ENCODE measurements at regions of chr19 and their contacts with region 1.

Region 1: DNA sequence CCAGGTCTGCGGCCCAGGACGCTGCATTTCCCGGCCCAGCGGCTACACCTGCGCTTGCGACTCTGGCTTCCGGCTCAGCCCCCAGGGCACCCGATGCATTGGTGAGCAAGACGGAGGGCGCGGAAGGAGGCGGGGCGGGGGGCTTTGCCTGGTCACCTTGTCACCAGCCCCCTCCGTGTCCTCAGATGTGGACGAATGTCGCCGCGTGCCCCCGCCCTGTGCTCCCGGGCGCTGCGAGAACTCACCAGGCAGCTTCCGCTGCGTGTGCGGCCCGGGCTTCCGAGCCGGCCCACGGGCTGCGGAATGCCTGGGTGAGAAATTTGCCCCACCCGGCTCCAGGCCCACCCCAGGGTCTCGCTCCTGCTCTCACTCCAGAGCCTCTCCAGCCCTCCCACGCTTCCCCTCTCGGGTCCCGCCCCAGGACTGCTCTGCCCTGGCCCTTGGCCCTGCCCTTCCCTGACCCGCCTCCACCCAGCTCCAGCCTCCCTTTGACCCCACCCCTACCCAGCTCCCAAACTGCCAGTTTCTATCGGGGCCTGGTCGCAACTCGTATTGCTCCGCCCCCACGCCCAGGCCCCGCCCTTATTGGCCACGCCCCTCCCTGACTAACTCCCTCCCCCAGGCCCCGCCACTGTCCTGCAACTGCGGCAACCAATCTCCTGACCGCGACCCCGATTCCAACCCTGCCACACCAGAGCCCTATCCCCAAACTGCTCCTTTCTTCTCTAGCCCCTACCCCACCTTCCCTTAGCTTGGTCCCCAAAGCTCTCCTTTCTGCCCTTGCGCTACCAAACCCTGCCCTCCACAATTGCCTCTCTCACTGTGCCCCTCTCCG is 8.6 kb downstream of the LTBP4 start:
- DNase-seq: peak; percentile 74 to 86 (median 82)
- H3K4me3 ChIP-seq: peak overlapping the region in 1 of 2 donors; percentile 63
- H3K4me3 Mint-ChIP-seq: peak overlapping the region; percentile 77 to 91 (median 88)
- H3K27ac ChIP-seq: peak overlapping the region; percentile 66
- H3K27ac Mint-ChIP-seq: peak overlapping the region; percentile 94 to 100 (median 97)
- H3K4me1 ChIP-seq: peaks cover 82% of the 10 kb centered on the region
- H3K4me1 Mint-ChIP-seq: peaks cover 39 to 98% (median 61%) of the 10 kb centered on the region in 4 donors
- H3K27me3 ChIP-seq: no peaks in the 10 kb centered on the region
- H3K27me3 Mint-ChIP-seq: no peaks in the 10 kb centered on the region

Region 2: DNA sequence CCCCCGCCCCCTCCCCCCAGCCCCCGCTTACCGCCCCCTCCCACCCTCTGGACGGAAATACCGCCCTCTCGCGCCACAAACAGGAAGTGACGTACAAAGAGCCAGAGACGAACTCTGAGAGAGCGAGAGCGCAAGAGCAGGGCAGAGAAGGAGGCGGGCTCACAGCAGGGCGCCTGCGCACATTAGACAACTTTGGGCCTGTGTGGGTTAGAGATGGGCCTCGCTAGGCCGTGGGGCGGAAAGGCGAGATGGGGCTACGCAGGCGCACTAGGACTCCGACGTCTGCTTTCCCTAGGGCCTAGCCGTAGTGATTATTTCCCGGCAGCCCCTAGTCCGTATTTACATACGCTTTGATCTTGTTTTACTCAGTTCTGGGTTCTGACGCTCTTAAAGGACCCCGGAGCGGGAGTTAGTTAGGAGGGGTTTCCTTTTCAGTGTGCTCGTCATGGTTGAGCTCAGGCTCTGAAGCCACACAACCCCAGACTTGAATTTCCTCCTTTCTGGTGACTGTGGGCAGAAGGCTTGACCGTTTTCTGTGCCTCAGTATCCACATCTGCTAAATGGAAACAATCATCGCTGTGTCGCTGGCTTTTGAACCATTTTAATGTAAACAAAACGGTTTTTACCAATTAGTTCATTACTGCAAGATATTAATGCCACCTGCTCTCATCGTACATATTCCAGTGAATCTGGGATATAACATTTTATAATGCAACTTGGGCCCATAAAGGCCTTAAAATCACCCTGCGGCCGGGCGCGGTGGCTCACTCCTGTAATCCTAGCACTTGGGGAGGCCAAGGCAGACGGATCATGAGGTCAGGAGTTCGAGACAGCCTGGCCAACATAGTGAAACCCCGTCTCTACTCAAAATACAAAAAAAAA is 324.2 kb before region 1 on chr19:
- CTCF ChIA-PET with region 1: no interaction called
- POLR2A ChIA-PET with region 1: interaction called, 3 read pairs
- intact Hi-C with region 1: loop called (anchors 5 kb)
- DNase-seq: peak; percentile 97 to 100 (median 100)
- H3K4me3 ChIP-seq: peak overlapping the region; percentile 45 to 58
- H3K4me3 Mint-ChIP-seq: peak overlapping the region; percentile 84 to 98 (median 92)
- H3K27ac ChIP-seq: peak overlapping the region; percentile 88
- H3K27ac Mint-ChIP-seq: peak overlapping the region; percentile 93 to 99 (median 98)
- H3K4me1 ChIP-seq: peaks cover 49% of the 10 kb centered on the region
- H3K4me1 Mint-ChIP-seq: peaks cover 26 to 56% (median 40%) of the 10 kb centered on the region in 4 donors
- H3K27me3 ChIP-seq: no peaks in the 10 kb centered on the region
- H3K27me3 Mint-ChIP-seq: no peaks in the 10 kb centered on the region

Region 3: DNA sequence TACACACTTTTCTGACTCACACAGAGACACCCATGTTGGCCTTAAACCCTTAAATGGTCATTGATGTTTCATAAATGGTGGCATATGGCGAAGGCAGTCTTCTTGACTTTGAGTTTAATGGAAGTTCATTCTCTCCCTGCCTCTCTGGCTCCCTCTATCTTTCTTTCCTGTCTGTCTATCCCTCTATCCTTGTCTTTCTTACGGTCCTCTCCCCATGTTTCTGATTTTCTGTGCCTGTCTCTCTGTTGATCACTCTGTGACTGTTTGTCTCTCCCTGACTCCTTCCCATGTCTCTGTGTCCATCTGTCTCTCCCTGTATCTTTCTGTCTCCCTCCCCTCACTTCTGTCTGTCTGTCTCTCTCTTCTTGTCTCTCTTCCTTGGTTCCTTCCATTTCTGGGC is 76.3 kb before region 1 on chr19:
- CTCF ChIA-PET with region 1: no interaction called
- POLR2A ChIA-PET with region 1: no interaction called
- intact Hi-C with region 1: no loop called
- DNase-seq: no peak
- H3K4me3 ChIP-seq: no peak overlapping the region
- H3K4me3 Mint-ChIP-seq: no peak overlapping the region
- H3K27ac ChIP-seq: no peak overlapping the region
- H3K27ac Mint-ChIP-seq: no peak overlapping the region
- H3K4me1 ChIP-seq: peaks cover 14% of the 10 kb centered on the region
- H3K4me1 Mint-ChIP-seq: peaks cover 7 to 24% (median 14%) of the 10 kb centered on the region in 4 donors
- H3K27me3 ChIP-seq: peaks cover 9% of the 10 kb centered on the region
- H3K27me3 Mint-ChIP-seq: peaks cover 16 to 27% of the 10 kb centered on the region in 2 donors

Region 4: GRCh38 chr19:40560092-40560507 is 49.7 kb before region 1 on chr19:
- CTCF ChIA-PET with region 1: no interaction called
- POLR2A ChIA-PET with region 1: no interaction called
- intact Hi-C with region 1: no loop called
- DNase-seq: no peak
- H3K4me3 ChIP-seq: no peak overlapping the region
- H3K4me3 Mint-ChIP-seq: no peak overlapping the region
- H3K27ac ChIP-seq: no peak overlapping the region
- H3K27ac Mint-ChIP-seq: no peak overlapping the region
- H3K4me1 ChIP-seq: no peaks in the 10 kb centered on the region
- H3K4me1 Mint-ChIP-seq: peaks cover 0 to 2% (median 0%) of the 10 kb centered on the region in 4 donors
- H3K27me3 ChIP-seq: no peaks in the 10 kb centered on the region
- H3K27me3 Mint-ChIP-seq: peaks cover 31 to 38% of the 10 kb centered on the region in 2 donors

Region 5: GRCh38 chr19:40570313-40571004 is 39.3 kb before region 1 on chr19:
- CTCF ChIA-PET with region 1: interaction called, 5 read pairs
- POLR2A ChIA-PET with region 1: interaction called, 71 read pairs
- intact Hi-C with region 1: loop called (anchors 2 kb)
- DNase-seq: peak; percentile 95 to 98 (median 98)
- H3K4me3 ChIP-seq: peak overlapping the region; percentile 17 to 61
- H3K4me3 Mint-ChIP-seq: peak overlapping the region; percentile 65 to 88 (median 82)
- H3K27ac ChIP-seq: no peak overlapping the region
- H3K27ac Mint-ChIP-seq: peak overlapping the region; percentile 30 to 94 (median 91)
- H3K4me1 ChIP-seq: peaks cover 14% of the 10 kb centered on the region
- H3K4me1 Mint-ChIP-seq: peaks cover 8 to 26% (median 16%) of the 10 kb centered on the region in 4 donors
- H3K27me3 ChIP-seq: no peaks in the 10 kb centered on the region
- H3K27me3 Mint-ChIP-seq: peaks cover 5 to 7% of the 10 kb centered on the region in 2 donors

Region 6: DNA sequence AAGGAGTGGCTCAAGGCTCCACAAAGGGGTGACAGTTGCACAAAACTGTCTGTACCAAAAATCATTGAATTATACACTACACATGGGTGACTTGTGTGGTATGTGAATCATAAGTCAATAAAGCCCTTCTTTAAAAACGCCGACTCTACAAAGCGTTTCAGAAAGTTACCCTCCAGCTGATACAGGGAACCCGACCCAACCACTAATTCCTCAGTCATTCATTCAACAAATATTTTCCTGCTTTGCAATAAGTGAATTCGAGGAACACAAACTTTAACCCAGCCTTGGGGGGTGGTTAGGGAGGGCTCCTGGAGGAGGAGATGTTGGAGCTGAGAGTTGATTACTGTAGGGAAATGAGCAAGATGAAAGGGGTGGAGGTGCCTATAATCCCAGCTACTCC is 23.4 kb after region 1 on chr19:
- CTCF ChIA-PET with region 1: interaction called, 106 read pairs
- POLR2A ChIA-PET with region 1: interaction called, 17 read pairs
- intact Hi-C with region 1: loop called (anchors 1 kb)
- DNase-seq: no peak
- H3K4me3 ChIP-seq: no peak overlapping the region
- H3K4me3 Mint-ChIP-seq: no peak overlapping the region
- H3K27ac ChIP-seq: no peak overlapping the region
- H3K27ac Mint-ChIP-seq: no peak overlapping the region
- H3K4me1 ChIP-seq: peaks cover 6% of the 10 kb centered on the region
- H3K4me1 Mint-ChIP-seq: peaks cover 4 to 14% (median 7%) of the 10 kb centered on the region in 4 donors
- H3K27me3 ChIP-seq: no peaks in the 10 kb centered on the region
- H3K27me3 Mint-ChIP-seq: peaks cover 0 to 2% of the 10 kb centered on the region in 2 donors

Region 7: DNA sequence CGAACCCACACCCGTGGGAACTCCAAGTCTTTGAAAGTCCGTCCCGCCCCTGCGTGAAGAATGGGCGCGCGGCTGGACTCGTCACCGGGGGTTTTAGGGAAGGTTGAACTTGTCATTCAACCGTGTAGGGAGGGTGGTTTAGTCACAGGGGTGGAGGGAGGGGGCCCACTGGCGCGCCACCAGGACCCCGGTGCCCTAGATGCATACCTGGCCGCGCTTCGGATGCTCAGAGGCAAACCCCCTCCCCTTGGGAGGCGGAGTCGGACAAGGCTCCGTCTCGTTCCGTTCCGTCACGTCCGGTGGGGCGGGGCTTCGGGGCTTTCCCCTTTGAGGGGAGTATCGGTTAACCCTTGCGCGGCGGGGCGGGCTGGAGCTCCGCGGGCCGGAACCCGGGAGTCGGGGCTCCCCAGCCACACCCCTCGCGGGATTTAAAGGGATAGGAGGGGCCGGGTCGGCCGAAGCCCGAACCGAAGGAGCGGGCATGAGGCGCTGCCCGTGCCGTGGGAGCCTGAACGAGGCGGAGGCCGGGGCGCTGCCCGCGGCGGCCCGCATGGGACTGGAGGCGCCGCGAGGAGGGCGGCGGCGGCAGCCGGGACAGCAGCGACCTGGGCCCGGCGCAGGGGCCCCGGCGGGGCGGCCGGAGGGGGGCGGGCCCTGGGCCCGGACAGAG is 107.0 kb after region 1 on chr19 and contains the starts of genes COQ8B and ITPKC:
- CTCF ChIA-PET with region 1: no interaction called
- POLR2A ChIA-PET with region 1: interaction called, 3 read pairs
- intact Hi-C with region 1: loop called (anchors 5 kb)
- DNase-seq: peak; percentile 98 to 100 (median 99)
- H3K4me3 ChIP-seq: peak within 1 kb of the TSS; percentile 78 to 83
- H3K4me3 Mint-ChIP-seq: peak within 1 kb of the TSS; percentile 87 to 97 (median 92)
- H3K27ac ChIP-seq: peak within 1 kb of the TSS; percentile 98
- H3K27ac Mint-ChIP-seq: peak within 1 kb of the TSS; percentile 96 to 99 (median 98)
- H3K4me1 ChIP-seq: peaks cover 70% of the 10 kb centered on the region
- H3K4me1 Mint-ChIP-seq: peaks cover 40 to 83% (median 58%) of the 10 kb centered on the region in 4 donors
- H3K27me3 ChIP-seq: no peaks in the 10 kb centered on the region
- H3K27me3 Mint-ChIP-seq: no peaks in the 10 kb centered on the region
- total RNA-seq, gene COQ8B: 48.0 to 54.7 TPM
- total RNA-seq, gene ITPKC: 8.1 to 10.2 TPM

Measured in CD4-positive, alpha-beta memory T cell (primary cell).